Activated CD8-positive, alpha-beta T cell treated with anti-CD3 and anti-CD28 coated beads, Interleukin-2, amount 10 ng/mL, durations not matched to agents 7 days and 5 days (primary cell): ENCODE measurements at regions of chr12 and their contacts with region 1.

Region 1: GRCh38 chr12:7142056-7142644 is 12.0 kb downstream of the CLSTN3 start:
- DNase-seq: peak; percentile 69
- ATAC-seq: peak; percentile 75
- H3K4me3 Mint-ChIP-seq: no peak overlapping the region
- H3K27ac Mint-ChIP-seq: peak overlapping the region; percentile 23
- H3K4me1 Mint-ChIP-seq: no peaks in the 10 kb centered on the region
- H3K27me3 Mint-ChIP-seq: no peaks in the 10 kb centered on the region

Region 2: GRCh38 chr12:7035463-7035862 is 106.7 kb before region 1 on chr12:
- CTCF ChIA-PET with region 1: no interaction called
- POLR2A ChIA-PET with region 1: no interaction called
- DNase-seq: no peak
- ATAC-seq: no peak
- H3K4me3 Mint-ChIP-seq: no peak overlapping the region
- H3K27ac Mint-ChIP-seq: no peak overlapping the region
- H3K4me1 Mint-ChIP-seq: peaks cover 5% of the 10 kb centered on the region
- H3K27me3 Mint-ChIP-seq: peaks cover 14% of the 10 kb centered on the region

Region 3: DNA sequence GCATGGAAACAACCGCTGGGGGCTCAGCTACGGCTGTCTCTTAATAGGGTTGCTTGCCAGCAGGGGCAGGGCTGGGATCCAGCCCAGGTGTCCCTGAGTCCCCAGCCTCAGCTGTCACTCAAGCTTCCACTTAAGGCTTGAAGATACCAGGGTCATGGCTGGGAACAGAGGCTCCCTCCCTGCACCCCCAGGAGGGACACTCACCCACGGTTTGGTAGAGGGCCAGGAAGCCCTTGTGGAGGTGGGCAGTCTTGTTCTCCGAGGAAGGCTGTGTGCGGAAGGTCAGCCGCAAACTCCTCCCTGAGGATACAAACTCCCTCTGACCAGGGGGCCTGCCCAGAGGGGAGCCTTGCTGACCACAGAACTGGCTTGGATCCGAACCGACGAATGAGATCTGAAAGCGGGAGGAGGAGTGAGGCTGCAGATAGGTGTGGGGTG is 40.4 kb before region 1 on chr12:
- CTCF ChIA-PET with region 1: no interaction called
- POLR2A ChIA-PET with region 1: no interaction called
- DNase-seq: no peak
- ATAC-seq: no peak
- H3K4me3 Mint-ChIP-seq: no peak overlapping the region
- H3K27ac Mint-ChIP-seq: no peak overlapping the region
- H3K4me1 Mint-ChIP-seq: peaks cover 29% of the 10 kb centered on the region
- H3K27me3 Mint-ChIP-seq: no peaks in the 10 kb centered on the region

Region 4: DNA sequence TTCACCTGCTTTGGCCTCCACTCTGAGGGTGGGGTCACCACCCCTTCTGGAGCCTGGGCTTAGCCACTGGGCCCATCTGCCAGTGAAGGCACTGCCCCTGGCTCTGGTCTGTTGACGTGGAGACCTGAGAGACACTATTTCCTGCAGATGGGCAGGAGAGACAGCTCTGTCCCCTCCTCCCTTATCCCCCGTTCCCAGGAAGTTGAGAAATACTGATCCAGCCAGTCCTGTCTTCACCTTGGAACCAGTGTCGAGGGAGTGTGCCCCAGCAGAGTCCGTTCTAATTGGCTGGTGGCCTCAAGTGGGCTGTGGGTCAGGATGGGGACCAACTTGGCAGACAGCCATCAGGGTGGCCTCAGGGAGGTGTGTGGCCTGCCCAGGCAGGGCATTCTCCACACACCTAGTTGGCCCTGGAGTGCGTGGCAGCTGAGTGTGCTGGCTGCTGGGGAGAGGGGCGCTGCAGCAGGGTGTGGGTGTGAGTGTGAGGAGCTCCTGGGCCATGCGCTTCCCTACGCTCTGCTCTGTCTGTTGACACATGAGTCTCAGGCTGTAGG is 13.4 kb after region 1 on chr12:
- CTCF ChIA-PET with region 1: interaction called, 15 read pairs
- POLR2A ChIA-PET with region 1: no interaction called
- DNase-seq: no peak
- ATAC-seq: peak; percentile 28
- H3K4me3 Mint-ChIP-seq: no peak overlapping the region
- H3K27ac Mint-ChIP-seq: peak overlapping the region; percentile 18
- H3K4me1 Mint-ChIP-seq: no peaks in the 10 kb centered on the region
- H3K27me3 Mint-ChIP-seq: no peaks in the 10 kb centered on the region

Region 5: DNA sequence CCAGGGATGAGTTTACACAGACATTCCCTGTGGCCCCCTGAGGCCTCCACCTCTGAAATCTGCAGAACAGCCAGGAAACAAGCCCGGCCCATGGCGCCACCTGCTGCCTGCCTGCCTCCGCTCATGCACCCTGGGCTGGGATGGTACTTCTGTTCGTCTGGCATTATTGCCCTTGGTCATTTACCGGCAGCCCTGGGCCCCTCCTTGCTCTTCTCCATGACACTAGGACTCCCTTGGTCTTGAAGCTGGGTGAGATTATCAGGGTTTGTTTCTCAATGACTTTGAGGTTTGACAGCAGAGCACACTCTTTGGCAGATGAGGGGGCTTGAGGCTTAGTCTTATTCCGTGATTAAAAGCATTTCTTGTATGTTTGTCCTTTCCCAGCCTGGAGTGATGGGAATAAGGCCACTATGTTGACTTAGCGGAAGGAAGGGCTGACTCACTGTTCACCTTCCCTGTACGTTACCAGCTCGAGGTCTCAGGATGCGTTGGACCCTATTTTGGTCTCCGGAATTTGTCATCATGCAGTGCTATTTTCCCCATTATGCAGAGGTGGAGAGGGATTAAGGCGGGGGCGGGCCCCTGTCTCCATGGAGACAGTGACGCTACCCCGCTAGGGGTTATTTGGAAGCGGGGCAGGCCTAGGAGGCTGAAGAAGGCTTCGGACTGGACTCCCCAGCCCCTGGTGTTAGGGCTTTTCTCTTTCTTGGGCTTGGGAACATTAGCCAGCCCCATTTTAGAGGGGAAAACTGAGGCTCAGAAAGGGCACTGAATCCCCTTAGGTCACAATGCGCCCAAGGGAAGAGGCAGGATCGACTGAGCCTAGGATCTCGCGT is 46.6 kb after region 1 on chr12:
- CTCF ChIA-PET with region 1: interaction called, 12 read pairs
- POLR2A ChIA-PET with region 1: no interaction called
- DNase-seq: peak; percentile 73
- ATAC-seq: peak; percentile 40
- H3K4me3 Mint-ChIP-seq: peak overlapping the region; percentile 90
- H3K27ac Mint-ChIP-seq: peak overlapping the region; percentile 94
- H3K4me1 Mint-ChIP-seq: peaks cover 31% of the 10 kb centered on the region
- H3K27me3 Mint-ChIP-seq: peaks cover 2% of the 10 kb centered on the region

Region 6: GRCh38 chr12:7282844-7283243 is 140.7 kb after region 1 on chr12:
- CTCF ChIA-PET with region 1: no interaction called
- POLR2A ChIA-PET with region 1: no interaction called
- DNase-seq: no peak
- ATAC-seq: no peak
- H3K4me3 Mint-ChIP-seq: no peak overlapping the region
- H3K27ac Mint-ChIP-seq: no peak overlapping the region
- H3K4me1 Mint-ChIP-seq: no peaks in the 10 kb centered on the region
- H3K27me3 Mint-ChIP-seq: peaks cover 27% of the 10 kb centered on the region